Activated CD4-positive, alpha-beta T cell treated with anti-CD3 and anti-CD28 coated beads for 36 hours (primary cell): ENCODE measurements at regions of chr5 and their contacts with region 1.

Region 1: DNA sequence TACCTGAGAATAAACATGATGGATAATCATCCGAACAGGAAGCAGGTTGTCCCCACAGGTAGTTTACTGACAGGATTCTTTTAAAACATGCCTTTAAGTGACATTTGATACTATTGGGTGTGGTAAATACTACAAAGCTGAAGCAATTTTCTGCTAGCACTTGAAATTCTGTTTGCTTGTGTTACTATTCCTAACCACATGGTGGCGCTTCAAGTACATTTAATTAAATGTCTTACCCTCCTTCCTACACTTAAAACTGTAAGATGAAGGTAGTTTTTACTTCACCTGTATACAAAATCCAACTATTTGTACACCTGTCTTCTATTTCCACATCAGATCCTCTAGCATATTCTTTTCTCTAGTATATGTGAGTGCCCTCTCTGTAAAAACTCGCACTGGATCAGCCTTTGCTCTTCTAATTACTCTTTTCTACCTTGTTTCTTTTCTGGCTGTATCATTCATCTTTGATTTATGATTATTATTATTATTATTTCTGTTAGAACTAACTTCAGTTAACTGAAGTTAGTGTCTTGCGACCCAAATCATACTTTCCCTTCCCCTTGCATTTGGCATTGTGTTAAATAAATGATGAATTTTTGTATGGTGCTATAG is 18.4 kb downstream of the SLC25A46 start:
- DNase-seq: peak; percentile 17
- ATAC-seq: no peak
- H3K4me3 Mint-ChIP-seq: no peak overlapping the region
- H3K27ac Mint-ChIP-seq: no peak overlapping the region
- H3K4me1 Mint-ChIP-seq: peaks cover 27% of the 10 kb centered on the region
- H3K27me3 Mint-ChIP-seq: no peaks in the 10 kb centered on the region

Region 2: GRCh38 chr5:110769000-110769681 is 11.9 kb after region 1 on chr5:
- CTCF ChIA-PET with region 1: interaction called, 20 read pairs
- POLR2A ChIA-PET with region 1: no interaction called
- intact Hi-C with region 1: no loop called
- DNase-seq: no peak
- ATAC-seq: no peak
- H3K4me3 Mint-ChIP-seq: no peak overlapping the region
- H3K27ac Mint-ChIP-seq: no peak overlapping the region
- H3K4me1 Mint-ChIP-seq: no peaks in the 10 kb centered on the region
- H3K27me3 Mint-ChIP-seq: peaks cover 7% of the 10 kb centered on the region

Region 3: DNA sequence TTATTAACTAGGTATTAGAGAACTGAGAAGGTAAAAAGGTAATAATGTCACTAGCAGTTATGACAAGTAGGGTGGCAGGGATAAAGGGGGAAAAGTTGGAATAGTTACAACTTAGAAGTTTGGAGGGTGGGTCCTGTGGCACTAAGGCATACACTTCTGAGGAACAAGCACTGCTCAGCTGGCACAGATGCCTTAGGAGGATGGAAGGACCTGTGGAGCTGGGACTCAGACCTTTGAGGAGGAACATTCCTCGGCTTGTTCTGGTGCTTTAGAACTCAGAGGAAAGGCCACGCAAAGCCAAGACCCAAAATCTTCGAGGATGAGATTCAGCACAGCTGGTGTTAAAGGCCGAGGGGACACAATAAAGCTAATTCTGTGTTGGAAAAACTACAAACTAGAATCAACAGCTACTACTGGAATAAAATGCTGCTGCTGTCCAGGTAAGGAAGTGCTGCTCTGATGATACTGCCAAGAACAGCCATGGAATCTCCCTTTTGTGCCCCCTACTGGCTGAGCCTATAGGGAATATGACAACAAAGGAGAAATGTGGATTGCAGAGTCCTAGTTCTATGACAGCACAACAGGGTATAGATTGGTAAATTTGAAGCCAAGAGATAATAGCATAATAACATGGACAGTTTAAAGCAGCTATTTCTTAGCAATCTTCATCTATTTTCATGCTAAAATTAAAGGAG is 108.3 kb after region 1 on chr5:
- CTCF ChIA-PET with region 1: no interaction called
- POLR2A ChIA-PET with region 1: no interaction called
- intact Hi-C with region 1: loop called in 1 of 2 experiments (anchors 2 kb)
- DNase-seq: peak; percentile 9
- ATAC-seq: no peak
- H3K4me3 Mint-ChIP-seq: no peak overlapping the region
- H3K27ac Mint-ChIP-seq: no peak overlapping the region
- H3K4me1 Mint-ChIP-seq: no peaks in the 10 kb centered on the region
- H3K27me3 Mint-ChIP-seq: peaks cover 9% of the 10 kb centered on the region

Region 4: DNA sequence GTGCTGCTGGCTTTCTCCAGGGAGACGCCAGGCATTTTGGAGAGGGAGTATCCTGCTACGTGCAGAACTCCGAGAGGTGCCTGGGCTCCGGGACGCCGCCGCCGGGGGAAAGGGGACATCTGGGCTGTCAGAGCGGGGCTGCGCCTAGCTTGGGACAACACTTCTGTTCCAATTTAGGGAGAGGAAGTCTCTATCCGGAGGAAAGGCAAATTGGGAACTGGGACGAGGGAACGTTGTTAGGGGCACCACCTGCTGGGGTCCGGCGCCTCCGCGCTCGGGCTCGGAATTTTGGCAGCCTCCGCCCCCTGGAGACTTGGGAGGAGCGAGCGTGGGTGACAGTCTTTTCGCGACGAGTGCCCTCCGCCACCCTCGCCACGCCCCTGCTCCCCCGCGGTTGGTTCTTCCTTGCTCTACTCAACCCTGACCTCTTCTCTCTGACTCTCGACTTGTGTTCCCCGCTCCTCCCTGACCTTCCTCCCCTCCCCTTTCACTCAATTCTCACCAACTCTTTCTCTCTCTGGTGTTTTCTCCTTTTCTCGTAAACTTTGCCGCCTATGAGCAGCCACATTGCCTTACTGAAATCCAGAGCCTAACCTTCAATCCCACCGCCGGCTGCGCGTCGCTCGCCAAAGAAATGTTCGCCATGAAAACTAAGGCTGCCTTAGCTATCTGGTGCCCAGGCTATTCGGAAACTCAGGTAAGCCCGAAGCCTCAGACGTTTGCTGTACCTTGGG is 315.9 kb after region 1 on chr5:
- CTCF ChIA-PET with region 1: no interaction called
- POLR2A ChIA-PET with region 1: no interaction called
- intact Hi-C with region 1: loop called (anchors 5 kb)
- DNase-seq: peak; percentile 82
- ATAC-seq: peak; percentile 73
- H3K4me3 Mint-ChIP-seq: peak overlapping the region; percentile 81
- H3K27ac Mint-ChIP-seq: peak overlapping the region; percentile 37
- H3K4me1 Mint-ChIP-seq: peaks cover 24% of the 10 kb centered on the region
- H3K27me3 Mint-ChIP-seq: peaks cover 62% of the 10 kb centered on the region